Naive thymus-derived CD4-positive, alpha-beta T cell (primary cell): ENCODE measurements at regions of chr2 and their contacts with region 1.

Region 1: DNA sequence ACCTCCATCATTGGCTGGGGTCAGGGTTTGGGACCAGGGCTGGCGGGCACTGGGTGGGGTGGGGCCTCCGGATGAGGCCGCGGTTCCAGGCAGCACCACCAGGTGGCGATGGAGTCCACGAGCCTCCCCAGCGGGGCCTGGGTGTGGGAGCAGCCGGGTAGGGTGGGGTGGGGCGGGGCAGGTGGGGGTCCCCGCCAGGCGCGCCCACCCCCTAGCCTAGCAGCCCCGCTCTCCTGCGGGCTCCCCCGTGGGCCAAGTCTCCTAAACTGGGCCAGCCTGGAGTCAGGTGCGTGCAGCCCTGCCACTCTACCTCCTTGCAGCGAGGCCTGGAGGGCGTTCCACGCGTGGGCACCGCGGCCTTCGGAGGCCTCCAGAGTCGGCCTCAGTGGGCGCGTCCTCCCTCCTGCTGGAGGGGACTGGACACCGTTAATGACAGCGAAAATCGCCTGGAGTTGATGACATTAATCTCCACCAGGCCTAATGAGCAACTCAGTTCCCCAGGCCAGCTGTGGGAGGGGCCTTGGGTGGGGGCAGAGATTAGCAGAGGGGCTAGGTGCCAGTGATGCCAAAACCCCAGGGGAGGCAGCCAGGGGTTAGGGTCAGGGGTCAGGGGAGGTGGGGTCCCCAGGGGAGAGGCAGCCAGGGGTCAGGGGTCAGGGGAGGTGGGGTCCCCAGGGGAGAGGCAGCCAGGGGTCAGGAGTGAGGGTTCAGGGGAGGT is 187.6 kb downstream of the TWIST2 start:
- DNase-seq: peak; percentile 30 to 79 (median 62)
- ATAC-seq: peak; percentile 85
- H3K4me3 ChIP-seq: no peak overlapping the region
- H3K4me3 Mint-ChIP-seq: no peak overlapping the region
- H3K27ac ChIP-seq: no peak overlapping the region
- H3K27ac Mint-ChIP-seq: no peak overlapping the region
- H3K4me1 ChIP-seq: no peaks in the 10 kb centered on the region
- H3K4me1 Mint-ChIP-seq: peaks cover 0 to 2% (median 0%) of the 10 kb centered on the region in 7 donors
- H3K27me3 ChIP-seq: no peaks in the 10 kb centered on the region
- H3K27me3 Mint-ChIP-seq: peaks cover 7 to 27% (median 18%) of the 10 kb centered on the region in 5 donors

Region 2: DNA sequence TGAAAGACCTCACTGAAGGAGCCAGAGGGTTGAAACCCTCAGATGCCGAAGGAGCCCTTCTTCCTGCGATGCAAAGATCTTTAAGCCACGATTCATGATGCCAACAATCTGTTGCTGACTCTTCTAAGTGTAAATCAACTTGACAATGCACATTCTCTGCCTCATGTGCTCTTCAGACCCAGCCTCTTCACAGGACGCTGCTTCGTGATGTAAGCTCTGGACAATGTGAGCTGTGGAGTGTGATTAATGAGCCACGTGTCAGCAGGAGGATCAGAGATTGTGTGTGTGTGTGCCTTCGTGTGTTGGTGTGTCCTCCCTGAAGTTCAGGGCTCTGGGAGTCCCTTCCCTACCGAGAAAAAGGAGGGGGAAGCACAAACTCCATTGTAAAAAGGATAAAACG is 214.1 kb before region 1 on chr2:
- CTCF ChIA-PET with region 1: no interaction called
- POLR2A ChIA-PET with region 1: no interaction called
- intact Hi-C with region 1: no loop called
- DNase-seq: no peak
- ATAC-seq: no peak
- H3K4me3 ChIP-seq: no peak overlapping the region
- H3K4me3 Mint-ChIP-seq: no peak overlapping the region
- H3K27ac ChIP-seq: no peak overlapping the region
- H3K27ac Mint-ChIP-seq: no peak overlapping the region
- H3K4me1 ChIP-seq: no peaks in the 10 kb centered on the region
- H3K4me1 Mint-ChIP-seq: peaks cover 0 to 4% (median 0%) of the 10 kb centered on the region in 7 donors
- H3K27me3 ChIP-seq: no peaks in the 10 kb centered on the region
- H3K27me3 Mint-ChIP-seq: peaks cover 2 to 90% (median 76%) of the 10 kb centered on the region in 5 donors

Region 3: DNA sequence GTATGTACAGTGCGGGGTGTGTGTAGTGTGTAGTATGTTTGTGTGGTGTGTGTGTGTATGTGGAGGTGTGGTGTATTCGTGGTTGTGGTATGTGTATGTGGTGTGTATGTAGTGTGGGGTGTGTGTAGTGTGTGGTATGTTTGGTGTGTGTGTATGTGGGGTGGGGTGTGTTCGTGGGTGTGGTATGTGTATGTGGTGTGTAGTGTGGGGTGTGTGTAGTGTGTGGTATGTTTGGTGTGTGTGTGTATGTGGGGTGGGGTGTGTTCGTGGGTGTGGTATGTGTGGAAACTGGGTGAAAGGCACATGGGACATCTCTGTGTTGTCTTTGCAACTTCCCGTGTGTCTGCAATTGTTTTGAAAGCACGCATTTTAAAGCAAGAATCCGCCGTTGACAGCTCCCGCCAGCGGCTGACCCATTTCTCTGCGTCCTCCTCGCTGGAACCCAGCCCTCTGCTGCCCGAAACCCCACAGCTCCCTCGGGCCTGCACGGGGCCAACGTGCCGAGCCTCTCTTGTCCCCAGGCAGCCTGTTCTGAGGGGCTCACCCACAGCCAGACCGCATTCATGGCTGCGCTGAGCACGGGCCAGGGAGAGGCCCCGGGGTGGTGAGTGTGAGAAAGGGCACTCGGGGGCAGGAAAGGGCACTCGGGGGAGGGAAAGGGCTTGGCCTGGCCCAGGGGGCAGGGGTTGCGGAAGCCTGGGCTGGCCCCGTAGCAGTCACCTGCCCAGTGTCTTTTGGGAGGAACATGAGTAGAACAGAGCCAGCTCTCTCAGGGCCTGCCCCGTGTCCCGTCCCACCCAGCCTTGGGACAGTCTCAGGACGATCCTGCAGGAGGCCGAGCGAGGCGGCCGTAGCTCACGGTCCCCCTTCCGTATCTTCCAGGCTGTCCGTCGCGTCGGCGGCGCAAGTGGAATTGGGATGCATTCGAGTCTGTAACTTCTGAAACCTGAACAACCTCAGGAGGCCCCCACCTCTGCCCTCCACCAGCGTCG is 126.3 kb before region 1 on chr2:
- CTCF ChIA-PET with region 1: no interaction called
- POLR2A ChIA-PET with region 1: no interaction called
- intact Hi-C with region 1: no loop called
- DNase-seq: no peak
- ATAC-seq: peak; percentile 33
- H3K4me3 ChIP-seq: no peak overlapping the region
- H3K4me3 Mint-ChIP-seq: no peak overlapping the region
- H3K27ac ChIP-seq: no peak overlapping the region
- H3K27ac Mint-ChIP-seq: no peak overlapping the region
- H3K4me1 ChIP-seq: no peaks in the 10 kb centered on the region
- H3K4me1 Mint-ChIP-seq: peaks cover 0 to 1% (median 0%) of the 10 kb centered on the region in 7 donors
- H3K27me3 ChIP-seq: no peaks in the 10 kb centered on the region
- H3K27me3 Mint-ChIP-seq: peaks cover 0 to 10% (median 4%) of the 10 kb centered on the region in 5 donors

Region 4: DNA sequence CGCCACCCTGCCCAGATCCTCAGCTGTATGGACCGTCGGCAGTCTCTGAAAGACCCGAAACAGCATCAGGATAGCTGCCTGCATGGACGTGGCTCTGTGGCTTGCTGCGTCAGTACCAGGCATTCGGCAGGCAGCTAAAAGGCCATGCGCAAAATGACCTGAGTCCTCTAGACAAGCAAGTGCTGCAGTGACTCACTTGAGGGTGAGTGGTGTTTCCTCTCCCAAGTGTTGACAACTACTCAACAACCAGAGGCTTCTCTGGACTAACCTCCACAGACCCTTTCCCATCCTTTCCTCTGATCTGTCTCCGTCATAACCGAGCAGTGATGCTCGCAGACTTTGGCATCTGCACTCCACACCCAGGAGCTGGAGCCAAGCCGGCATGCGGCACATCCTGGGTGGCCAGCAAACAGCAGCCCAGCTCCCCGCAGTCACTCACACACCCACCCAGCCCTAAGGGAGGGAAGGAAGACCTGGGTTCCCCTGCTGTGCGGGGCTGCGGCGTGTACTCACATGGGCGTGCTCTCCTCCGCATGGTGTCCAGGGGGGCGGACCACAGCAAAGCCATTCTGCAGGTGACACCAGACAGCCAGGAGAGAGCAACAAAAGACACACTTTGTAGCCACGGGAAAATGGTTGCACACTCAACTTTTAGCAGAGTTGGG is 51.7 kb after region 1 on chr2:
- CTCF ChIA-PET with region 1: no interaction called
- POLR2A ChIA-PET with region 1: no interaction called
- intact Hi-C with region 1: no loop called
- DNase-seq: no peak
- ATAC-seq: no peak
- H3K4me3 ChIP-seq: no peak overlapping the region
- H3K4me3 Mint-ChIP-seq: no peak overlapping the region
- H3K27ac ChIP-seq: no peak overlapping the region
- H3K27ac Mint-ChIP-seq: peak overlapping the region in 2 of 9 donors; percentile 5 to 22
- H3K4me1 ChIP-seq: no peaks in the 10 kb centered on the region
- H3K4me1 Mint-ChIP-seq: peaks cover 0 to 8% (median 0%) of the 10 kb centered on the region in 7 donors
- H3K27me3 ChIP-seq: no peaks in the 10 kb centered on the region
- H3K27me3 Mint-ChIP-seq: no peaks in the 10 kb centered on the region

Region 5: GRCh38 chr2:239882331-239882732 is 846.8 kb after region 1 on chr2:
- CTCF ChIA-PET with region 1: no interaction called
- POLR2A ChIA-PET with region 1: no interaction called
- intact Hi-C with region 1: loop called in 1 of 2 experiments (anchors 1 kb)
- DNase-seq: peak in 8 of 9 donors; percentile 12 to 59 (median 44)
- ATAC-seq: peak; percentile 54
- H3K4me3 ChIP-seq: no peak overlapping the region
- H3K4me3 Mint-ChIP-seq: no peak overlapping the region
- H3K27ac ChIP-seq: no peak overlapping the region
- H3K27ac Mint-ChIP-seq: peak overlapping the region in 1 of 9 donors; percentile 45
- H3K4me1 ChIP-seq: peaks cover 0 to 6% of the 10 kb centered on the region in 2 donors
- H3K4me1 Mint-ChIP-seq: peaks cover 3 to 11% (median 6%) of the 10 kb centered on the region in 7 donors
- H3K27me3 ChIP-seq: no peaks in the 10 kb centered on the region
- H3K27me3 Mint-ChIP-seq: peaks cover 4 to 19% (median 12%) of the 10 kb centered on the region in 5 donors

Region 6: GRCh38 chr2:239991689-239992314 is 956.3 kb after region 1 on chr2:
- CTCF ChIA-PET with region 1: no interaction called
- POLR2A ChIA-PET with region 1: no interaction called
- intact Hi-C with region 1: loop called in 1 of 2 experiments (anchors 10 kb)
- DNase-seq: peak in 6 of 9 donors; percentile 12 to 54 (median 42)
- ATAC-seq: peak; percentile 86
- H3K4me3 ChIP-seq: no peak overlapping the region
- H3K4me3 Mint-ChIP-seq: no peak overlapping the region
- H3K27ac ChIP-seq: no peak overlapping the region
- H3K27ac Mint-ChIP-seq: no peak overlapping the region
- H3K4me1 ChIP-seq: no peaks in the 10 kb centered on the region
- H3K4me1 Mint-ChIP-seq: peaks cover 0 to 5% (median 0%) of the 10 kb centered on the region in 7 donors
- H3K27me3 ChIP-seq: no peaks in the 10 kb centered on the region
- H3K27me3 Mint-ChIP-seq: no peaks in the 10 kb centered on the region